ENCODE measurements at regions of chr10 and their contacts with region 1.

Region 1: DNA sequence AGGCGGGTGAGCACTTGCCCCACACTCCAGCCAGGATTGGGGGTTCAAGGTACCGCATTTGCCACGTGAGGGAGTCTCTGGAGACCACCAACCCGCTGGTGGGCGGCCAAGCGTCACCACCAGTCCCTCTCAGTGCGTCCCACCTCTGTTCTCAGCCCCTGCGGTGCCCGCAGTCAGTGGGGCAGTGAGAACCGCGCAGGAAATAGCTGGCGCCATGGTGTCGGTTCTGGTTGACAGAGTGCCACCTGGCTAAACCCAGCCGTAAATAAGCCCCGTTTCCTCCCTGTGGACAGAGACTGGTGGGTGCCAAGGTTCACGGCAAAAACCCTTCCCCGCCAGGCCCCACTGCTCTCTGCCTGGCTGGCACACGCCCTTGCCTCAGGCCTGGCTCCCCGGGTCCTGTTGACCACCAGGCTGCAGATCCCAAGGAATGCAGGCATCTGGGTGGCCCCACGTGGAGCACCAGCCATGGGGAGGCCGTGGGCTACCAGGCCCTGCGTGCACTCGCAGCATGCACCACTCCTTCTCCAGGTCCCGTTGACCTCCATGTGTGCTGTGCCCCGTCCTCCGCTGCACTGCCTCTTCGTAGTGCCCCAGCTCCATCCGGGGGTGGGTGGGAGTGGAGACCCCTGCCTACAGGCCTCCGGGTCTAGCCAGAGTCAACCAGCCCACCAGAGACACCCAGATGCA is 140.0 kb downstream of the LHPP start:
- DNase-seq: peak; percentile 75
- ATAC-seq: peak; percentile 86
- H3K4me3 Mint-ChIP-seq: peak overlapping the region; percentile 70
- H3K27ac Mint-ChIP-seq: peak overlapping the region; percentile 94
- H3K4me1 Mint-ChIP-seq: peaks cover 97% of the 10 kb centered on the region
- H3K27me3 Mint-ChIP-seq: no peaks in the 10 kb centered on the region
- CTCF ChIP-seq: no peak

Region 2: GRCh38 chr10:124539935-124540641 is 61.5 kb before region 1 on chr10:
- CTCF ChIA-PET with region 1: interaction called, 4 read pairs
- POLR2A ChIA-PET with region 1: interaction called, 64 read pairs
- intact Hi-C with region 1: loop called (anchors 1 kb)
- DNase-seq: peak; percentile 71
- ATAC-seq: peak; percentile 66
- H3K4me3 Mint-ChIP-seq: peak overlapping the region; percentile 50
- H3K27ac Mint-ChIP-seq: peak overlapping the region; percentile 82
- H3K4me1 Mint-ChIP-seq: peaks cover 89% of the 10 kb centered on the region
- H3K27me3 Mint-ChIP-seq: no peaks in the 10 kb centered on the region
- CTCF ChIP-seq: no peak

Region 3: DNA sequence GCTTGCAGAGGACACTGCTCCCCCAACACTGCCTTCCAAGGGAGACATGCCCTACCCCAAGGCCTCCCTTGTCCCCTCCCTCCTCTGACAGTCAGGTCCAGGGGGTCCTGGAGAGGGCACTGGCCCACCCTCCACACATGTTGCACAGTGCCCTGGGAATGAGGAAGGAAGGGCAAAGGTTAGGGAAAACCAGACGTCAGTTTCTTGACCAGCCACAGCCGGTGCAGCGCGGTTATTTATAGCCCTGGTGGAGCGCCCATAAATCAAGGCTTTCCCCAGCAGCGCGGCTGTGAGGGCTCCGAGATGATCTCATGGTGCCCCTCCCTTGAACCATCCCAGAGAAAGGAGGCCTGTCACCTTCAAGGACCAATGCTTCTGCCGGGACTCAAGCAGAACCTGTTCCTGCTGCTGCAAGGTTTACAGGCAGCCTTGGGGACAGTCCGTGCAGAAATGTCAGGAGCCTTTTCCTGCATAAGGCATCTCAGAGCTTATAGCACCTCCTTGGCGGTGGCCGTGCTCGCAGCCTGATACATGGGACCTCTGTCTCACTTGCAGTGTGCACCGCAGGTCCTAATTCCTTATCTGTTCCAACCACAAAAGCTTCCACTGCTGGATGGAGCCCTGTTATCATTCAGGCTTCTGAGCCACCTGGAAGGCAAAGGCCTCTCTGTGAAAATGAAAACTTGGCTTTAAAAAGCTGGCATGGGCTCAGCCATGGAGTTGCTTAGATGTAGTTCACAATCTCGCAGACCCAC is 12.7 kb before region 1 on chr10:
- CTCF ChIA-PET with region 1: no interaction called
- POLR2A ChIA-PET with region 1: interaction called, 35 read pairs
- intact Hi-C with region 1: loop called (anchors 1 kb)
- DNase-seq: no peak
- ATAC-seq: no peak
- H3K4me3 Mint-ChIP-seq: no peak overlapping the region
- H3K27ac Mint-ChIP-seq: no peak overlapping the region
- H3K4me1 Mint-ChIP-seq: peaks cover 57% of the 10 kb centered on the region
- H3K27me3 Mint-ChIP-seq: no peaks in the 10 kb centered on the region
- CTCF ChIP-seq: no peak

Region 4: GRCh38 chr10:124626759-124627380 is 25.3 kb after region 1 on chr10:
- CTCF ChIA-PET with region 1: interaction called, 4 read pairs
- POLR2A ChIA-PET with region 1: interaction called, 207 read pairs
- intact Hi-C with region 1: no loop called
- DNase-seq: no peak
- ATAC-seq: peak; percentile 63
- H3K4me3 Mint-ChIP-seq: peak overlapping the region; percentile 46
- H3K27ac Mint-ChIP-seq: peak overlapping the region; percentile 95
- H3K4me1 Mint-ChIP-seq: peaks cover 99% of the 10 kb centered on the region
- H3K27me3 Mint-ChIP-seq: no peaks in the 10 kb centered on the region
- CTCF ChIP-seq: no peak

Region 5: DNA sequence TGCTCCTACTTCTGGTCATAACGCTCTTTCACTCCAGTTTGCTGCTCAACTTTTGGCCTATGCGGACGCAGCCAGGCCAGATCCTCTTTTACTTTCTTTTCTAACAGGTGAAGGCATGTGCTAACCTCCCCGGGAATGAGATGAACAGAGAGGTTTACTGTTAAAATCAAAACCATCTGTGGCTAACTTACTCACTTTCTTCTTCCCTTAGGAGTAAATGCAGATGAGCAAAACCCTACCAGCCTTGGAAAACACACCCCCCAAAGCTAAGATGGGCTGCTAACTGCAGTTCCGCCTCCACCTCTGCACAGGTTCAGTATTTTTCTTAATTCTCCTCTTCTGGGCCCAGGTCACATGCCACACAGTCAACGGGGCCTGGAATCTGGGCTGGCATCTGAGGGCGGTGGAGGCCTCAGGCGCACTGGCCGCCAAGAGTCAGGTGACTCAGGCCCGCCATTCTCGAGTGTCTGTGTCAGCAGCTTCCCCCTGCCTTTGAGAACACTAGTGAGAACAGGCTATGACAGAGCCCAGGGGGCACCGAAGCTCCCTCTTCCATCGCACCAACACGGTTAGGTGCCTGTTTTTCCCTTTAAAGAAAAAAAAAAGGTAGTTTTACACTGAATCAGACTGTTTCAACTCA is 131.5 kb after region 1 on chr10:
- CTCF ChIA-PET with region 1: no interaction called
- POLR2A ChIA-PET with region 1: interaction called, 11 read pairs
- intact Hi-C with region 1: no loop called
- DNase-seq: no peak
- ATAC-seq: peak; percentile 43
- H3K4me3 Mint-ChIP-seq: peak overlapping the region; percentile 58
- H3K27ac Mint-ChIP-seq: peak overlapping the region; percentile 82
- H3K4me1 Mint-ChIP-seq: peaks cover 100% of the 10 kb centered on the region
- H3K27me3 Mint-ChIP-seq: no peaks in the 10 kb centered on the region
- CTCF ChIP-seq: no peak

Measured in activated B cell treated with CpG ODN at 0.5 μM for 24 hours (primary cell).